PC-9 (cell line): ENCODE measurements at regions of chr1 and their contacts with region 1.

Region 1: GRCh38 chr1:94329986-94330385 is 88.2 kb upstream of the ABCD3 start:
- DNase-seq: no peak
- H3K4me3 ChIP-seq: no peak overlapping the region
- H3K27ac ChIP-seq: no peak overlapping the region
- H3K4me1 ChIP-seq: peaks cover 78% of the 10 kb centered on the region
- H3K27me3 ChIP-seq: no peaks in the 10 kb centered on the region
- CTCF ChIP-seq: peak; percentile 30; the same call in 1 of the 2 replicates

Region 2: DNA sequence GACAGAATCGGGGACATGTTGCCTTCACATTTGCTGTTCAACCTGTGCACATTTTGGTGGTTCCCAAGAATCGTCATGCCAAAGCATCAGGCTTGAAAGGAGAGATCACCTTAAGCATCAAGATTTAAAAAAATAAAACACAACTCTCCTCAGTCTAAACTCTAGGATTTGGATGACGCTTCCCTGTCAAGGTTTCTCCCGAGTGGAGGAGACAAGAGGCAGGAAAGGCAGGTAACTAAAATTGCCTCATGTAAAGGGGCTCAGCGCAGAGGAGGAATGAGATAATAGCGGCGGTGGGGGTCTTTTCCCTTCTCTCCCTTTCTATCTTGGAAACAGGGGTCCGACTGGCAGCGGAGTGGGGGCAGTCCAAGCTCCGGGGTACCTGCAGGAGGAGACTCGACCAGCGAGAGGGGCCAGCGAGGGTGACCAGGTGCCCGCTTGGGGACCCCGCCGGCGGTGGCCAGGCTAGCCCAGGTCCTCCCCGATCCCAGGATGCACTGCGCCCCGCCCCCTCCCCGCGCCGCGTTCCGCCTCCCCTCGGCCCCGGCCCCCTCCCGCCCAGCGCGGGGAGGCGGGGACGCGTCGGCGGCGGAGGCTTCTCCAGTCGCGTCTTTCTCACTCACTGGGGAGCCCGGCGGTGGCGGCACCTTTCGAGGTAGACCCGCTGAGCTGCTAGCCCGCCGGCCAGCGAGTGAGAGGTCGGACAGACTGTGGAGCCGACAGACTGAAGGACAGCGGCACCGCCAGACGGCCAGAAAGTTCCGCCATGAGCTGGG is 882.3 kb before region 1 on chr1 and contains the start of gene FNBP1L:
- CTCF ChIA-PET with region 1: no interaction called
- POLR2A ChIA-PET with region 1: interaction called, 11 read pairs
- intact Hi-C with region 1: no loop called
- DNase-seq: peak; percentile 76 to 86
- H3K4me3 ChIP-seq: peak within 1 kb of the TSS; percentile 90
- H3K27ac ChIP-seq: peak within 1 kb of the TSS; percentile 44
- H3K4me1 ChIP-seq: peaks cover 28% of the 10 kb centered on the region
- H3K27me3 ChIP-seq: no peaks in the 10 kb centered on the region
- CTCF ChIP-seq: no peak
- total RNA-seq, gene FNBP1L: 34.1 and 34.3 TPM in 2 replicates

Region 3: DNA sequence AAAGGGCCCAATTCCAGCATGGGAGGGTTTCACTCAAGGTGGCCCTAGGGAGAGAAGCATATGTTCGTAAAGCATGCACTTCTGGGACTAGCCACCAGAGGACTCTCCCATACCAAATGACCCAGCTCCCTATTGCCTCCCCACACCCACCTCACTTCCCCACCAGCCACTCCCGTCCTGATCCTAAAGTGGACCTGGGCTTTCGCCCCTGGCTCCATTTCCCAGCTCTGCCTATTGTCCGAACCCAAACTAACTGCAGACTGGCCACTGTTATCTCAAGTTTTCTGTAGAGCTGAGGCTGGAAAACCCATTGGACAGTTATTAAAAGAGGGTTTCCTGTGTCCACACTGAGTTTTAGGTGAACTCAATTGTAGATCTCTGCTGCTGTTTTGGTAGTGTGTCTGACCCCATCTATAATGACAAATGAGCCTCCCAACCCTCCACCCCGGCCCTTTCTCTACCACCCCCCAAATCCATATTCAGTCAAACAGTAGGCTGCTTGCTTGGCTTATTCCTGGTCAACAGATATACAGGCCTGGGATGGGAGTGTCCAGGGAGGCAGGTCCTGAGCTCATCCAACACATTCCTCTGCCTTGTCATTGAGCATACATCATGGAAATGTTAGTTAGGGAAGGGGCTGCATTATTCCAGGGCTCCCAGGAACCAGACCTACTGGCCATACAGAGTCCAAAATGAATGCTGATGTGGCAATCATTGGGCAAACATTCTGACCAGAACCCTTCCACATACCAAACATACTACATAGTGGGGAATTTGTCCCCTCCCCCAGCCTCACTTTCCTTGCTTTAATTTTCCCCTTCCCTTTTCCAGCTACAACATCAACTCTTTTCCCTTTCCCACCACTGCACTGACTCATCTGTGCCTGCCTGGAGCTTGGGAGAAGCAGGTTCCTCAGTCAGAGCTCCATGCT is 268.2 kb before region 1 on chr1:
- CTCF ChIA-PET with region 1: interaction called, 16 read pairs
- POLR2A ChIA-PET with region 1: interaction called, 22 read pairs
- intact Hi-C with region 1: no loop called
- DNase-seq: peak; percentile 65 to 83
- H3K4me3 ChIP-seq: no peak overlapping the region
- H3K27ac ChIP-seq: peak overlapping the region; percentile 52
- H3K4me1 ChIP-seq: peaks cover 44% of the 10 kb centered on the region
- H3K27me3 ChIP-seq: no peaks in the 10 kb centered on the region
- CTCF ChIP-seq: peak; percentile 95

Region 4: GRCh38 chr1:94105957-94106529 is 223.9 kb before region 1 on chr1:
- CTCF ChIA-PET with region 1: interaction called, 3 read pairs
- POLR2A ChIA-PET with region 1: no interaction called
- intact Hi-C with region 1: loop called (anchors 5 kb)
- DNase-seq: peak in 1 of 2 experiments; percentile 50
- H3K4me3 ChIP-seq: no peak overlapping the region
- H3K27ac ChIP-seq: peak overlapping the region; percentile 54
- H3K4me1 ChIP-seq: peaks cover 47% of the 10 kb centered on the region
- H3K27me3 ChIP-seq: no peaks in the 10 kb centered on the region
- CTCF ChIP-seq: no peak

Region 5: DNA sequence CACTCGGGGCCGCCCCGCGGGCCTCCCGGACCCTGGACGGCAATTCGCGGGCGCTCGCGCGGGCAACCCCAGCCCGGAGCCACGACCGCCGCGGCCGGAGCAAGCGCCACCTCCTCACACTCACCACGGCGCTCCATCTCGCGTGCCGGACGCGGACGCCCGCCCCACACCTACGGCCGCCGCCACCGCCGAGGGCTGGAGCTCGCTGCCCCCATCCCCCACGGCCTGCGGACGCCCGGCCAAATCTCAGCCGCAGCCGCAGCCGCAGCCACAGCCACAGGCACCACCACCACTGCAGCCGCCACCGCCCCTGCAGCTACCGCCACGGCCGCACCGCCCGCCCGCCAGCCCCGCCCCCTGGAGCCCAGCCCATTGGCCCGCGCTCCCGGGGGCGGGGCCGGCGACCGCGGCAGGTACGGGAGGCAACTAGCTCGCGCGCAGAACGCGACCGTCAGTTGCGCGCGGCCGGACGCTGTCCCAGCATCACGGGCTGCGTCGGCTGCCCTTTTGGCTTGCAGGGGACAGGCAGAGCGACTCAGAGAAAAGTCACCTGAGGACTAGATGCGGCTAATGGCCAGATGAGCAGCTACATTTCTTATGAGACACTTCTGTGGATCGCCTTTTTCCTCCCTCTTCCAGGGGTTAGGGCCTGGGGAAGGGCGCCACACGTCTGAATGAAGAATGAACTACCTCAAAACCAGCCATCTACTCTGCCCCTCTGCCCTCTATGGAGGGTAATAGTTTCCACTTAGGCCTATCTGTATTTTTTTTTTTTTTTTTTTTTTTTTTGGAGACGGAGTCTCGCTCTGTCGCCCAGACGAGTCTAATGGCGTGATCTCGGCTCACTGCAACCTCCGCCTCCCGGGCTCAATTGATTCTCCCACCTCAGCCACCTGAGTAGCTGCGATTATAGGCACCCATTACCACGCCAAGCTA is 92.4 kb before region 1 on chr1 and contains the start of gene ARHGAP29:
- CTCF ChIA-PET with region 1: interaction called, 3 read pairs
- POLR2A ChIA-PET with region 1: interaction called, 9 read pairs
- intact Hi-C with region 1: loop called (anchors 1 kb)
- DNase-seq: peak; percentile 88 to 91
- H3K4me3 ChIP-seq: peak within 1 kb of the TSS; percentile 87
- H3K27ac ChIP-seq: peak within 1 kb of the TSS; percentile 85
- H3K4me1 ChIP-seq: peaks cover 70% of the 10 kb centered on the region
- H3K27me3 ChIP-seq: no peaks in the 10 kb centered on the region
- CTCF ChIP-seq: no peak
- total RNA-seq, gene ARHGAP29: 123 and 137 TPM in 2 replicates

Region 6: DNA sequence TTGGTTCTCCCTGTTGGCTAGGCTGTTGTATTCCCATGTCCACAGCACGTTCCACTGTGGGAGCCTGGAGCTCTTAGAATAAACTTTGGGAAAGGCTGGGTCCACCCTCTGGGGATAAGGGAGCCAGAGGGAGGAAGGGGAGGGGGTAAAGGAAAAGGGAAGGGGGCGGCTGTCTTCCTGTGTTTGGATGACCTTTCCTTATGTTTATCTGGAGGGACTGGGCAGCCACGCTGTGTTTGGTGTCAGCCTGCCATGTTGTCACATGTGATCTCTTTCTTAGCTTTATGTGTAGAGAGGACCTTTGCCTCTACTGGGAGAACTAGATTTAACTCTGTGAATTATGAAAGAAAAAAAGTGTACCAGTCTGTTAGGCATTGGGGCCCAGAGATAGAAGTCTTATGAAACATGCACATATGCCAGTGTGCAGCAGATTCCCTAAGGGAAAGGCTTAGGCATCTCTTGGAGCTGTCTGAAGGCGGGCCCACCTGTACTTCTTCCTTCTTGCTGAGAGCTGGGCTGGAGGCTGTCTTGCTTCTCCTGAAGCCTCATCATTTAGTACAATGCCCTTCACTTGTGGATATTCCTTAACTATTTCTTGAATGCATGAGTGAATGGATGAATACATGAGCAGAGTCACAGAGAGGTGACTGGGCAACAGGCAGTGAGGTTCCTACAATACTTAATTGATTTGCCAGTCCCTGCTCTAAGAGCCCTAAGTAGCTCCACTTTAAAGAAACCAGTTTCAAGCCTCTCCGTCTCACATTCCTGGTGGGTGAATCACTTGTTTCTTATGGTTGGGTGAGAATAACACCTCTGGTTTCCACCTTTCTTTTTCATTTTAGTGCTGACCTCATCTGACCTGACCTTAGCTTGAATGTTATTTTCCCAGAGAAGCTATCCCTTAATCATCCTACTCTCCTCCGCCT is 30.1 kb before region 1 on chr1:
- CTCF ChIA-PET with region 1: interaction called, 3 read pairs
- POLR2A ChIA-PET with region 1: interaction called, 12 read pairs
- intact Hi-C with region 1: loop called (anchors 1 kb)
- DNase-seq: peak; percentile 71 to 100
- H3K4me3 ChIP-seq: peak overlapping the region; percentile 3; the same call in 1 of the 2 replicates
- H3K27ac ChIP-seq: peak overlapping the region; percentile 97
- H3K4me1 ChIP-seq: peaks cover 55% of the 10 kb centered on the region
- H3K27me3 ChIP-seq: no peaks in the 10 kb centered on the region
- CTCF ChIP-seq: no peak

Region 7: GRCh38 chr1:94440088-94440487 is 110.1 kb after region 1 on chr1:
- CTCF ChIA-PET with region 1: no interaction called
- POLR2A ChIA-PET with region 1: no interaction called
- intact Hi-C with region 1: no loop called
- DNase-seq: no peak
- H3K4me3 ChIP-seq: no peak overlapping the region
- H3K27ac ChIP-seq: no peak overlapping the region
- H3K4me1 ChIP-seq: no peaks in the 10 kb centered on the region
- H3K27me3 ChIP-seq: no peaks in the 10 kb centered on the region
- CTCF ChIP-seq: no peak; the same call in 1 of the 2 replicates

Region 8: DNA sequence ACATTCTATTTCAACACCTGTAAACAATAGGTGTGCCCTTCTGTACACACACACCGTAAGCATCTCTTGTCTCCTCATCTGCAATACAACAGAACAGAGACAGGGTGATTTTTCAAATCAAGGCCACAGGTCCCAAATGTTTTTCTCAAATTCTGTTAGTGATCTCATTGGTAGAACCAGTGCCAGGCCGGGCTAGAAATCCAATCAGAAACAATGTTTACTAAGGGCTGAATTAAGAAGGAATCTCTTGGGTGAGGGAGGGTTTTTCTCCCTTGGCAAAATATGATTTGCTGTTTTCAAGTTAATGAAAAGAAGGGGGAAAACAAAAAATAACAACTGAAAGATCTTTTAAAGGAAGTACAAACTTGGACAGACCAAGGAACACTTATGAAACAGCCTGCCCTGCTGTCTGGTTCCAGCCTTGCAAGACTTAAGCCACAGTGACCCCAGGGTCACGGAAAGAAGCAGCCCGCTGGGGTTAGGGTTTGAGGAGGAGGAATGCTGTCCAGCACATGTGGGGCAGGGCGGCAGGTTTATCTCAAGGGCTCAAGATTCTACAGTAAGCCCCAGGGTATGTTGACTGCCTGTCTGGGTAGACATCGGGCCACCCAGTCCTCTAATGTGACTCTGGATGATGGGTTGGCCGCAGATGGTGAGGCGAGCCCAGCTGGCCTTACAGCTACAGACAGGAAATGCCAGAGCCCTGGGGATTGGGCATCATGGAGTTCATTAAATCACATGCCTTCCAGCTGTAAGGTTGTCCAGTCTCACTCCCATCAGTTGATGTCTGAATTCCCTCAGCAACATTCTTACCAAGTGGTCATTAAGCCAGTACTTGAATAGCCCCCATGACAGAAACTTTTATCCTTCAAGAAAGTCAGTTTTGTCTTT is 416.9 kb after region 1 on chr1:
- CTCF ChIA-PET with region 1: no interaction called
- POLR2A ChIA-PET with region 1: no interaction called
- intact Hi-C with region 1: no loop called
- DNase-seq: no peak
- H3K4me3 ChIP-seq: no peak overlapping the region
- H3K27ac ChIP-seq: no peak overlapping the region
- H3K4me1 ChIP-seq: no peaks in the 10 kb centered on the region
- H3K27me3 ChIP-seq: no peaks in the 10 kb centered on the region
- CTCF ChIP-seq: no peak